ENCODE measurements at regions of chr1 and their contacts with region 1.

Region 1: DNA sequence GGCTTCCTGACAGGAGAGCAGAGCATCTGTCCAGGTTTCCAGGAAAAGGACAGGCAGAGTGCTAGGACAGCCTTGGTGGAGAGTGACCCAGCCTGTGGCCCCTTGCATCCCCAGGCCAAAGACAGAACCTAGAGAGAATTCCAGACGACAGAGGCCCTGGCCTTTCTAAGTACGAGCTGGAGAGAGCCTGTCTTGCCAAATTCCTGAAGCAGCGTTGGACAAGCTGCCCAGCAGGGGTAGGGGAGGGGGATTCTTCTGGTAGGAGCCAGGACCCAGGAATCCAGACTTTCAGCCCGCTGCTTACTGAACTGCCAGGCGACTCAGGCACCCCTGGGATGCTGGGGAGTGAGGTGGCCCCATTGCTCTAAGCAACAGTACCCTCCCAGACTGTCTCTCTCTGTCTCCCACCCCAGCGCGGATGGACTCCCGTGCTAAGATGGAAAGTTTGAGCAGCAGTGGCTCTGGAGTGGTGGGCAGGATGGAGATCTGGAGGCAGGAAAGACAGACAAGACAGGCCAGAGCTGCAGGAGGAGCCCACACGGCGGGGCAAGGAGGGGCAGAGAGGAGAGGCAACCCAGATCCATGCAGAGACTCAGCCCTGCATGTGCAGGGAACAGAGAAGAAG is 8.8 kb upstream of the PEAR1 start:
- DNase-seq: no peak
- H3K4me3 ChIP-seq: no peak overlapping the region
- H3K27ac ChIP-seq: no peak overlapping the region
- H3K4me1 ChIP-seq: peaks cover 0 to 14% (median 5%) of the 10 kb centered on the region in 4 donors
- H3K27me3 ChIP-seq: peaks cover 0 to 32% of the 10 kb centered on the region in 2 donors
- CTCF ChIP-seq: no peak

Region 2: DNA sequence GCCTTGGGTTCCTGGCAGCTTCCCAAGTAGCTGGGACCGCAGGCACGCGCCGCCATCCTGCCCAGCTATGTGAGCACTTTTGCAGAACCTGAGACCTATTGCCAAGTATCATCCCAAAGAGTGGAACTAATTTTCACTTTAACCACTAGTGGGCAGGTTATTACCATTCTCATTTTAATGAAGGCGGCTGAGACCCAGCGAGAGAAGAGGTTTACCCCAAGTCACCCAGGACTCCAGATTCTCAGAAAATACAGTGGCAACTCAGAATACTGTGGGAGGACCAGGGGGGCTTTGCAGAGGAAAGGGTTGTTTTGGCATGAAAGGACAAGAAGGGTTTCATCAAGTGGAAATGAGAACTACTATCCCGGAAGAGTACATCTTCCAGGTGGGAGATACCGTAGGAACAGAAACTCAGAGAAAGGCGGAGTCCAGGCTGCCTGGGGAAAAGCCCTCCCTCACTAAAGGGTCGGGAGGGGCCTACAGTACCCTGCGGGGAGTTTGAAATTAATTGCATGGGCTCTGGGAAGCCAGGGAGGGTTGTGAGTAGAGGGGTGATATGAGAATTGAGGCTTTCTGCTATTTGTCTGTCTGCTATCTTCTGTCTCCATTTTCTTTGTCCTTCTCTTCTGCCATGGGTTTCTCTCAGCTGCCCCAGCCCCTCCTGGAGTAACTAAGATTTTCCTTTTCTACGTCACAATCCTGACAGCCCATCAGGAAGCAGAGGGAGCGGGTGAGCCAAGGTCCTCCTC is 738.5 kb before region 1 on chr1:
- intact Hi-C with region 1: no loop called
- DNase-seq: peak; percentile 76 to 85
- H3K4me3 ChIP-seq: no peak overlapping the region
- H3K27ac ChIP-seq: peak overlapping the region; percentile 31 to 33
- H3K4me1 ChIP-seq: peaks cover 0 to 69% (median 27%) of the 10 kb centered on the region in 4 donors
- H3K27me3 ChIP-seq: peaks cover 0 to 9% of the 10 kb centered on the region in 2 donors
- CTCF ChIP-seq: peak; percentile 61 to 70

Region 3: GRCh38 chr1:156839426-156840109 is 45.1 kb before region 1 on chr1:
- intact Hi-C with region 1: loop called (anchors 5 kb)
- DNase-seq: no peak
- H3K4me3 ChIP-seq: no peak overlapping the region
- H3K27ac ChIP-seq: no peak overlapping the region
- H3K4me1 ChIP-seq: peaks cover 0 to under 1% (median 0%) of the 10 kb centered on the region in 4 donors
- H3K27me3 ChIP-seq: peaks cover 0 to 92% of the 10 kb centered on the region in 2 donors
- CTCF ChIP-seq: no peak

Measured in tibial artery (tissue), 4 donors.